AG04449 (cell line): ENCODE measurements at regions of chr7 and their contacts with region 1.

Region 1: GRCh38 chr7:139075031-139075652 is 34.4 kb downstream of the ZC3HAV1 start:
- DNase-seq: peak; percentile 31
- H3K4me3 ChIP-seq: no peak overlapping the region
- CTCF ChIP-seq: peak; percentile 55

Region 2: GRCh38 chr7:138886501-138886917 is 188.6 kb before region 1 on chr7:
- CTCF ChIA-PET with region 1: interaction called, 207 read pairs
- POLR2A ChIA-PET with region 1: no interaction called
- DNase-seq: no peak
- H3K4me3 ChIP-seq: no peak overlapping the region
- CTCF ChIP-seq: peak; percentile 22

Region 3: GRCh38 chr7:139023076-139023475 is 52.1 kb before region 1 on chr7:
- CTCF ChIA-PET with region 1: interaction called, 40 read pairs
- POLR2A ChIA-PET with region 1: no interaction called
- DNase-seq: no peak
- H3K4me3 ChIP-seq: no peak overlapping the region
- CTCF ChIP-seq: no peak

Region 4: DNA sequence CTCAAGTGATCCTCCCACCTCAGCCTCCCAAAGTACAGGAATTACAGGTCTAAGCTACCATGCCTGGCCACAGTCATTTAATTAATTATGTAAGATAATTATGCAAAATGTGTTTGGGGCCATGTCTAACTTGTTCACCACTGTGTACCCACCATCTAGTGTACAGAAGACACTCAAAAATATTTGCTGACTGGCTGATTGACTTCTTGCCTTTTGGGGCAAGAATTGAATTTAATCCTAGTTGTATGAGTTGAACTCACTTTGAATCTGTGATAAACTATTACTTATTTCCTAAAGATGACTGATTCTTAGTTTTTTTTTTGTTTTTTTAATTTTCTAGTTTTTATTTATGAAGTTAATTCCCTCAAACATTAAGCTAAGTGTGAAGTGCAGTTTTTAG is 23.5 kb before region 1 on chr7:
- CTCF ChIA-PET with region 1: interaction called, 24 read pairs
- POLR2A ChIA-PET with region 1: no interaction called
- DNase-seq: no peak
- H3K4me3 ChIP-seq: no peak overlapping the region
- CTCF ChIP-seq: no peak

Region 5: DNA sequence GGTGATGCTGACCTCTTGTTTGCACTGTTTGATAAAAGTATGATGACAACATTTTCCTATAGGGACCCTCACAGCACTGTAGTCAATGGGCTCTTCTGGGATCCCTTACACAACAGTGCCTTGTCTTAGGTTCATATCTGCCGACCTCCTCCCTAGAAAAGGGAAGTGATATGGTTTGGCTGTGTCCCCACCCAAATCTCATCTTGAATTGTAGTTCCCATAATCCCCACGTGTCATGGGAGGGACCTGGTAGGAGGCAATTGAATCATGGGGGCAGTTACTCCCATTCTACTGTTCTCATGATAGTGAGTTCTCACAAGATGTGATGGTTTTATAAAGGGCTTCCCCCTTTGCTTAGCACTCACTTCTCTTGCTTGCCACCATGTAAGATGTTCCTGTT is 11.3 kb after region 1 on chr7:
- CTCF ChIA-PET with region 1: interaction called, 30 read pairs
- POLR2A ChIA-PET with region 1: no interaction called
- DNase-seq: no peak
- H3K4me3 ChIP-seq: no peak overlapping the region
- CTCF ChIP-seq: no peak

Region 6: GRCh38 chr7:139104091-139104450 is 28.9 kb after region 1 on chr7:
- CTCF ChIA-PET with region 1: interaction called, 11 read pairs
- POLR2A ChIA-PET with region 1: no interaction called
- DNase-seq: no peak
- H3K4me3 ChIP-seq: no peak overlapping the region
- CTCF ChIP-seq: no peak